Heart left ventricle (tissue), 16 donors: ENCODE measurements at regions of chr2 and their contacts with region 1.

Region 1: GRCh38 chr2:52558265-52558664 is 1209.3 kb upstream of the CHAC2 start:
- DNase-seq: no peak
- ATAC-seq: no peak
- H3K4me3 ChIP-seq: no peak overlapping the region
- H3K27ac ChIP-seq: no peak overlapping the region
- H3K4me1 ChIP-seq: no peaks in the 10 kb centered on the region
- H3K27me3 ChIP-seq: no peaks in the 10 kb centered on the region
- CTCF ChIP-seq: no peak
- POLR2A ChIP-seq: no peak

Region 2: GRCh38 chr2:52518678-52519077 is 39.6 kb before region 1 on chr2:
- intact Hi-C with region 1: loop called in 3 of 10 experiments (anchors 1 to 2 kb)
- DNase-seq: no peak
- ATAC-seq: no peak
- H3K4me3 ChIP-seq: no peak overlapping the region
- H3K27ac ChIP-seq: no peak overlapping the region
- H3K4me1 ChIP-seq: no peaks in the 10 kb centered on the region
- H3K27me3 ChIP-seq: no peaks in the 10 kb centered on the region
- CTCF ChIP-seq: no peak
- POLR2A ChIP-seq: no peak